H1 (cell line): ENCODE measurements at regions of chr14 and their contacts with region 1.

Region 1: GRCh38 chr14:38197001-38197783 is 10.5 kb upstream of the SSTR1 start:
- DNase-seq: no peak
- H3K4me3 ChIP-seq: peak overlapping the region in 1 of 4 experiments; percentile 51; a peak in 1 of 8 replicates
- H3K27ac ChIP-seq: no peak overlapping the region; the same call in 1 of the 2 replicates
- H3K4me1 ChIP-seq: peaks cover 0 to 18% (median 4%) of the 10 kb centered on the region in 4 experiments; a peak in 4 of 7 replicates
- H3K27me3 ChIP-seq: no peaks in the 10 kb centered on the region
- CTCF ChIP-seq: no peak; a peak in 1 of 4 replicates
- EP300 ChIP-seq: no peak
- POLR2A ChIP-seq: peak in 1 of 2 experiments; percentile 43; a peak in 1 of 3 replicates
- RAD21 ChIP-seq: no peak

Region 2: DNA sequence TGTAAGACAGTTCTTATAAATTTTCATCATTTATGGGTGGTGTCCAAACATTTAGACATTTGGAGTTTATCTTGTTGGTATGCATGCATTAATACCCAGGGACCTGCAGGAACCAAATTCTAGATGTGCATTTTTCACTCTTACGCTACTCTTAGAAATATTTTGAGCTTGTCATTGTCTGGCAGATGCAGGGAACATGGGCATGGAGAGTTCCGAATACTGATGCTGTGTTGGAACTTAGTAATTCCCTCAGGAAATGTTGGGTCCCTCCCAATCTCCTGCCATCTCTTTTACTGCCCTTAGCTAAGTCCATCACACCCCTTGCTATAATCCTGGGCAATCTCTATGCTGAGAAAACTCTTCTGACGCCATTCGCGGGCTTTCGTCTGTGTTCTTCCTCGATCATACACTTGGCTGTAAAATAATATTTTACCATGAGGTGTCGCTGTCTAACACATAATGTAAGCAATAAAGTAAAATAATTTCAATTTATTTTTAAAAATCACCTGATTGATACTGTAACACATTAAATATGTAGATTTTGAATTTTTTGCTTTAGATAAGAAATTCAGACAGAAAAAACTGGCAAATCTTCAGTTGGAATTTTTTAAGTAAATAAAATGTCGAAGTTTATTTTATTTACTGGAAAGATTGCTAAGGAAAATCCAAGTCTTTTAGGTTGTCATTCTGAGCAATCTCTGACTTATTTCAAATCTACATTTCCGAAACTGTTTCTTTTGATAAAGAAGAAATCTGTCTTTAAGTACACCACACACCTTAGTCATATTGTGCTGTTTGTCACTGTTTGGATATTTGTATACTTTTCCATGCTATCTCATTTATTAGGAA is 293.6 kb before region 1 on chr14:
- CTCF ChIA-PET with region 1: interaction called, 6 read pairs
- POLR2A ChIA-PET with region 1: interaction called, 31 read pairs
- DNase-seq: no peak
- H3K4me3 ChIP-seq: no peak overlapping the region
- H3K27ac ChIP-seq: no peak overlapping the region
- H3K4me1 ChIP-seq: peaks cover 0 to 2% (median 0%) of the 10 kb centered on the region in 4 experiments; a peak in 1 of 7 replicates
- H3K27me3 ChIP-seq: peaks cover 0 to 5% (median under 1%) of the 10 kb centered on the region in 4 experiments; a peak in 2 of 7 replicates
- CTCF ChIP-seq: peak in 2 of 3 experiments; percentile 50 to 54; a peak in 3 of 4 replicates
- EP300 ChIP-seq: no peak
- POLR2A ChIP-seq: no peak
- RAD21 ChIP-seq: peak; percentile 79 to 82

Region 3: DNA sequence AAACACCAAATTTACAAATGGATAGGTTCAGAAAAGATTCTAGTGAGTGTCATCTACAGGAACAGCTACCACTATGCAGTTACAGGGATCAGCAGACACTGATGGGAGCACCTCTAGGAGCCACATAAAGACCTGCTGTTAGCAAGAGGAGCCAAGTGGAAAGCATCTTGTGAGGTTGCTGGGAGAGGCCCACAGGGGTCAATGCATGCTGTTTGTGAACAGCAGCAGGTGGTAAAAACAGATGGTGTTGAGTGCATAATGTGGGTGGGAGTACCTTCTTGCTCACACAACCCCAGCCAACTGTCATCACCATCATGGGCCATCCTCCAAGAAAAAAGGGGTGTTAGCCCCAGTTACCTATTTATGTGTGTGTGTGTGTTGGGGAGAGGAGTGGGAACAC is 204.7 kb before region 1 on chr14:
- CTCF ChIA-PET with region 1: no interaction called
- POLR2A ChIA-PET with region 1: interaction called, 22 read pairs
- DNase-seq: no peak
- H3K4me3 ChIP-seq: no peak overlapping the region
- H3K27ac ChIP-seq: no peak overlapping the region
- H3K4me1 ChIP-seq: peaks cover 1 to 26% (median 10%) of the 10 kb centered on the region in 4 experiments; a peak in 5 of 7 replicates
- H3K27me3 ChIP-seq: no peaks in the 10 kb centered on the region
- CTCF ChIP-seq: no peak
- EP300 ChIP-seq: no peak
- POLR2A ChIP-seq: no peak
- RAD21 ChIP-seq: no peak

Region 4: DNA sequence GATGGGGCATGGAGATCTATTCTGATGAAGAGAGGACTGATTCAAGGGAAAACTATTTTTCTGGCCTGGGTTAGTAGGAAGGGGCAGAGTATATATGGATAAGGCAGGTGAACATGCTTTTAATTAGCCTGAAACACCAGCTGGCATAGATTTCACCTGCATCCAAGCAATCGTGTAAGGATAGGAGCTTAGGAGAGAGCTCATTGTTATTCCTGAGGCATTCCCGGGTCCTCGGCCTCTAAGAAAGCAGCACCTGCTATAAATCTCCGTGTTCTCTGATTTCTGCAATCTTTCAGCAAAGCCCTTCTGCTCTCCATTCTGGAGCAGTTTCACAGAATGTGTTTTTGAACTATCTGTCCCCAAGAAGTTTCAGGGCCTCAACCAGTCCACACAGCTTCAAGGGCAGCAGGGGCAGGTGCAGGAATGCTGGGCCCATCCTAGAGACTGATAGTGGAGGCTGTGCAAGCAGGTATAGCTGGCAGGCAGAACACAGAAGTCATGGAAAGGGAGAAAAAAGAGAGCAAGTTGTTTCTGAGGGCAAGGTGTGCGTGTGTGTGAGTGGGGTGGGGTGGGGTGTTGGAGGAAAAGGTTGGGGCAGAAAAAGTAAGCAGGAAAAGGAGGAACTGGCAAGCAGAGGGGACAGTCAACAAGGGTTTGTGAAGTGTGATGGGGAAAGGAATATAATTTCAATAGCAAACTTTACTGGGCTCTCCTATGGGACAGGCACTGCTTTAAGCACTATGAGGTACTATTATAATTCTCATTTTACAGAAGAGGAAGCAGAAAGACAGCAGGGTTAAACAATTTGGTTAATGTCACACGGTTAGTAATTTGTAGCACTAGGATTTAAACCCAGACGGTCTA is 193.2 kb before region 1 on chr14:
- CTCF ChIA-PET with region 1: no interaction called
- POLR2A ChIA-PET with region 1: interaction called, 50 read pairs
- DNase-seq: no peak
- H3K4me3 ChIP-seq: no peak overlapping the region
- H3K27ac ChIP-seq: no peak overlapping the region
- H3K4me1 ChIP-seq: peaks cover 2 to 8% (median 3%) of the 10 kb centered on the region in 4 experiments; a peak in 4 of 7 replicates
- H3K27me3 ChIP-seq: no peaks in the 10 kb centered on the region
- CTCF ChIP-seq: no peak
- EP300 ChIP-seq: no peak
- POLR2A ChIP-seq: no peak
- RAD21 ChIP-seq: no peak

Region 5: DNA sequence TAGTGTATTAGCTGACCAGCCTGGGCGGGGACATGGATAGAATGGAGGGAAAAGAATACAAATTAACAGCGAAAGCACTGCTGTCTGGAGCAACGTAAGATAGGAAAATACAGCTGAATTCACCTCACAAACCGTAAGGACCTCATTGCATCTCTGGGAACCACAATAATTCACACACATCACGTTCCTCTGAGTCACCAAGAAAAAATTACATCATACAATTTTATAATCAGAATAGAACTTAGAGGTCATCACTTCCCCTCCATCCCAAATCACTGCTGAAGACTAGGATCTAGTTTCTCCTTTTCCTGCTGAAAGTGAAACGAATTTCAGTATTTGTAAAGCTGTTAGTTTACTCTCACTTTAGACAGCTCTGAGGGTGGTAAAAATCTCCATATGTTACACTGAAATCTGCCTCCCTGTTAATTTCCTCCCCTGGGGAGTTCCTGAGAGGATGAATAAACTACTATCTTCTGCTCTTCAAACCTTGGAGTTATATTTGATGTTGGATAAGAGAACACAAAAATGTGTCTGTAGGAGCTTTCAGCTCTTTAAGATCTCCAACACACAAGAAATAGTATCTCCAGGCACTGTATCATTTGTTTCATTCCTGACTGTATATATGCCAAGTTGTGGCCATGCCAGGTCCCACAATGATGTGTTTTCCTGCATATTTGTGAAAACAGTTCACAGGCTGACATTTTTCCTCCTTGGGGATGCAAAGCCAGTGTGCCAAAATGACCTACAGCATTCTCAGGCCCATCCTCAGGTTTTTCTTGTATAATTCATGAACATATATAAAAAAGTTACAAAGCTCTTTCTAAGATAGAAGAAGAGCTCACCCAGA is 53.3 kb before region 1 on chr14:
- CTCF ChIA-PET with region 1: no interaction called
- POLR2A ChIA-PET with region 1: interaction called, 12 read pairs
- DNase-seq: no peak
- H3K4me3 ChIP-seq: peak overlapping the region in 1 of 4 experiments; percentile 22; a peak in 1 of 8 replicates
- H3K27ac ChIP-seq: no peak overlapping the region; the same call in 1 of the 2 replicates
- H3K4me1 ChIP-seq: peaks cover 2 to 12% (median 7%) of the 10 kb centered on the region in 4 experiments; a peak in 4 of 7 replicates
- H3K27me3 ChIP-seq: no peaks in the 10 kb centered on the region
- CTCF ChIP-seq: no peak
- EP300 ChIP-seq: no peak
- POLR2A ChIP-seq: no peak
- RAD21 ChIP-seq: no peak

Region 6: DNA sequence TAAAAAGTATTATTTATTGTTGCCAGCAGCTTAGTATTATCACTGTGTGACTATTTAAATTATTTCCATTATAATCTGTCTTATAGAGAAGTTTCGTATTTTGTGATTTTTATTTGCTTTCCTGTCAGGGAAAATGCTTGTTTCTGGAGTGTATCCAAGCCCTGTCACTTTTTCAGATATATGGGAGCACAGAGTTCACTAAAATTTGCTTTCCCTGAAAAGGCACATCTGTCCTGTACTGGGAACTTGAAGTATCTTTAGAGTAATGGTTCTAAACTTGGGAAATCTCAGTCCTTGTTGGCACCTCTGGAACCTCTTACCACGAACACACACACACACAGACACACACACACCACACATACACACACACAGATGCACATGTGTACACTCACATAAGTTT is 28.8 kb before region 1 on chr14:
- CTCF ChIA-PET with region 1: no interaction called
- POLR2A ChIA-PET with region 1: interaction called, 10 read pairs
- DNase-seq: no peak
- H3K4me3 ChIP-seq: no peak overlapping the region
- H3K27ac ChIP-seq: no peak overlapping the region
- H3K4me1 ChIP-seq: peaks cover 0 to 4% (median 0%) of the 10 kb centered on the region in 4 experiments; a peak in 1 of 7 replicates
- H3K27me3 ChIP-seq: no peaks in the 10 kb centered on the region
- CTCF ChIP-seq: no peak
- EP300 ChIP-seq: no peak
- POLR2A ChIP-seq: no peak
- RAD21 ChIP-seq: no peak

Region 7: GRCh38 chr14:38208618-38209562 is 11.7 kb after region 1 on chr14:
- CTCF ChIA-PET with region 1: interaction called, 5 read pairs
- POLR2A ChIA-PET with region 1: interaction called, 17 read pairs
- DNase-seq: peak in 1 of 2 experiments; percentile 79
- H3K4me3 ChIP-seq: peak overlapping the region; percentile 28 to 59 (median 35)
- H3K27ac ChIP-seq: no peak overlapping the region
- H3K4me1 ChIP-seq: peaks cover 2 to 20% (median 12%) of the 10 kb centered on the region in 4 experiments
- H3K27me3 ChIP-seq: peaks cover 58 to 81% (median 75%) of the 10 kb centered on the region in 4 experiments
- CTCF ChIP-seq: 0 out of 4 replicates have a peak, but pooled peaks of 1 of the 3 experiments have one; percentile 15
- EP300 ChIP-seq: peak in 1 of 2 experiments; percentile 29; a peak in 1 of 3 replicates
- POLR2A ChIP-seq: peak in 1 of 2 experiments; percentile 63; a peak in 2 of 3 replicates
- RAD21 ChIP-seq: peak; percentile 4 to 45; a peak in 2 of 4 replicates